Pancreas (tissue), 10 donors: ENCODE measurements at regions of chr4 and their contacts with region 1.

Region 1: DNA sequence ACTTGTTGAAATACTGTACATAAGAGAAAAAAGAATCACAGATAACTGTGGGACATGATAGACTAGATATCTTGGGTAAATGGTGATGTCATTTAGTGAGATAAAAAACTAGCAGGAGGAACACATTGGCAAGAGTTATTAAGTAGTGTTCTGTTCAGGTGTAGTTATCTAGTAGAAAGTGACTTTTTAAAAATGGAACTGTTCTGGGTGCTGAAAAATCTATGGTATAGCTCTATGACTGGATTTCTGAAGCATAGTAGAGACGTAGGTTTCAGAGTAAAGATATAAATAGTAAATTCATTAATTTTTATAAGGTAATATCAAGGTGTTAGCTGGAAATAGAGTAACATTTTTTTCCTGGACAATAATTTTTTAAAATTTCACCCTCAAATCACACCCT is 225.1 kb upstream of the UGT8 start:
- DNase-seq: no peak
- ATAC-seq: no peak
- H3K4me3 ChIP-seq: no peak overlapping the region
- H3K27ac ChIP-seq: no peak overlapping the region
- H3K4me1 ChIP-seq: no peaks in the 10 kb centered on the region
- H3K27me3 ChIP-seq: no peaks in the 10 kb centered on the region
- CTCF ChIP-seq: no peak

Region 2: GRCh38 chr4:113960684-113961321 is 412.7 kb before region 1 on chr4:
- intact Hi-C with region 1: loop called in 1 of 3 experiments (anchors 5 kb)
- DNase-seq: no peak
- ATAC-seq: no peak
- H3K4me3 ChIP-seq: no peak overlapping the region
- H3K27ac ChIP-seq: no peak overlapping the region
- H3K4me1 ChIP-seq: peaks cover 0 to 8% (median 5%) of the 10 kb centered on the region in 3 donors
- H3K27me3 ChIP-seq: no peaks in the 10 kb centered on the region
- CTCF ChIP-seq: no peak

Region 3: GRCh38 chr4:114423582-114423981 is 50.1 kb after region 1 on chr4:
- intact Hi-C with region 1: no loop called
- DNase-seq: no peak
- ATAC-seq: no peak
- H3K4me3 ChIP-seq: no peak overlapping the region
- H3K27ac ChIP-seq: no peak overlapping the region
- H3K4me1 ChIP-seq: no peaks in the 10 kb centered on the region
- H3K27me3 ChIP-seq: no peaks in the 10 kb centered on the region
- CTCF ChIP-seq: no peak